ENCODE measurements at regions of chr2 and their contacts with region 1.

Region 1: GRCh38 chr2:135004005-135004746 is 43.1 kb downstream of the MAP3K19 start:
- DNase-seq: peak; percentile 18
- H3K4me3 ChIP-seq: peak overlapping the region; percentile 37
- H3K27ac ChIP-seq: no peak overlapping the region
- H3K27me3 ChIP-seq: peaks cover 15% of the 10 kb centered on the region
- CTCF ChIP-seq: peak; percentile 99

Region 2: GRCh38 chr2:134892282-134893070 is 111.7 kb before region 1 on chr2:
- CTCF ChIA-PET with region 1: no interaction called
- POLR2A ChIA-PET with region 1: no interaction called
- DNase-seq: no peak
- H3K4me3 ChIP-seq: no peak overlapping the region
- H3K27ac ChIP-seq: no peak overlapping the region
- H3K27me3 ChIP-seq: no peaks in the 10 kb centered on the region
- CTCF ChIP-seq: no peak

Region 3: GRCh38 chr2:134988994-134989605 is 15.1 kb before region 1 on chr2:
- CTCF ChIA-PET with region 1: interaction called, 30 read pairs
- POLR2A ChIA-PET with region 1: interaction called, 3 read pairs
- DNase-seq: peak; percentile 3
- H3K4me3 ChIP-seq: no peak overlapping the region
- H3K27ac ChIP-seq: no peak overlapping the region
- H3K27me3 ChIP-seq: peaks cover 12% of the 10 kb centered on the region
- CTCF ChIP-seq: peak; percentile 54

Region 4: GRCh38 chr2:135164441-135164840 is 160.3 kb after region 1 on chr2:
- CTCF ChIA-PET with region 1: interaction called, 18 read pairs
- POLR2A ChIA-PET with region 1: no interaction called
- DNase-seq: peak; percentile 29
- H3K4me3 ChIP-seq: no peak overlapping the region
- H3K27ac ChIP-seq: no peak overlapping the region
- H3K27me3 ChIP-seq: no peaks in the 10 kb centered on the region
- CTCF ChIP-seq: no peak

Region 5: DNA sequence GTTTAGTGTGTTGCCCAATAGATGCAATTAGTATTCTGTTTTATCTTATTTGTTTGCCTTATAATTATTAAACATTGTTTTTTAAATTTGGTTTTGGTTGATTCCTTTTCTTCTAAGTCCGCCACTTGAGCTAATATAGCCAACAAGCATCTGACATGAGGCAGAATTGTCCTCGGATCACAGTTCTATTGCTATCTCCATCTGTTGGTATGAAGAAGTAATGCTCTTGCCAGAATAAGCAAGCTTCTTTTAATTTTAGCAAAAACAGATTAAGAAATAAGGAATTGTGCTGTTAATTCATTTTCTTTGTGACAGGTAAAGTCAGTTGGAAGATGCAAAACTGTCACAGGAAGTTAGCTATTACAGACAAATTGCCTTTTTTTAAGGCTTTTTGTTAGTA is 581.4 kb after region 1 on chr2:
- CTCF ChIA-PET with region 1: interaction called, 20 read pairs
- POLR2A ChIA-PET with region 1: no interaction called
- DNase-seq: no peak
- H3K4me3 ChIP-seq: no peak overlapping the region
- H3K27ac ChIP-seq: no peak overlapping the region
- H3K27me3 ChIP-seq: no peaks in the 10 kb centered on the region
- CTCF ChIP-seq: peak; percentile 39

Region 6: DNA sequence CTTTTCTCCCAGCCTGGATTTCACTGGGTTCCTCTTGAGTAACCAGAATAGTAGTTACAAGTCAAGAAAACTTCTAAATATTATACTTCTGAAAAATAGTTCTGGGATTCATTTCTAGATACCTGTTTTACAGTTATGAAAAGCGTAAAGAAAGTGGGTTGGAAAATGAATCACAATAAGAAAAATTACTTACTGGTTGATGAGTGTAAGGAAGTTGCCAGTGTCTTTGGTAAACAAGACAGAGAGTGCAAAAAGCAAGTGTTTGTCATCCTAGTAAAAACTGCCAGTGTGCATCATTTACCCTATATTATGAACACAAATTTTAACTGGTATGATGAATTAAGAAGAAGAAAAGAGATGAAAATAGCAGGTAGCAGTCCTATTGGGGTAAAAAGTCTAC is 616.0 kb after region 1 on chr2:
- CTCF ChIA-PET with region 1: interaction called, 12 read pairs
- POLR2A ChIA-PET with region 1: no interaction called
- DNase-seq: no peak
- H3K4me3 ChIP-seq: no peak overlapping the region
- H3K27ac ChIP-seq: no peak overlapping the region
- H3K27me3 ChIP-seq: no peaks in the 10 kb centered on the region
- CTCF ChIP-seq: no peak

Region 7: GRCh38 chr2:135709992-135710391 is 705.8 kb after region 1 on chr2:
- CTCF ChIA-PET with region 1: interaction called, 125 read pairs
- POLR2A ChIA-PET with region 1: interaction called, 3 read pairs
- DNase-seq: no peak
- H3K4me3 ChIP-seq: no peak overlapping the region
- H3K27ac ChIP-seq: no peak overlapping the region
- H3K27me3 ChIP-seq: no peaks in the 10 kb centered on the region
- CTCF ChIP-seq: peak; percentile 94